WTC11 (cell line): ENCODE measurements at regions of chr13 and their contacts with region 1.

Region 1: GRCh38 chr13:39415008-39415802 is 187.8 kb downstream of the LHFPL6 start:
- DNase-seq: peak; percentile 56
- ATAC-seq: peak; percentile 36; the same call in 1 of the 2 replicates
- H3K4me3 Mint-ChIP-seq: no peak overlapping the region
- H3K27ac Mint-ChIP-seq: no peak overlapping the region
- H3K4me1 Mint-ChIP-seq: peaks cover 75% of the 10 kb centered on the region
- H3K27me3 Mint-ChIP-seq: peaks cover 6% of the 10 kb centered on the region
- CTCF ChIP-seq: peak; percentile 21; the same call in 1 of the 2 replicates

Region 2: GRCh38 chr13:39531646-39532045 is 116.4 kb after region 1 on chr13:
- CTCF ChIA-PET with region 1: no interaction called
- POLR2A ChIA-PET with region 1: no interaction called
- DNase-seq: no peak
- ATAC-seq: no peak
- H3K4me3 Mint-ChIP-seq: no peak overlapping the region
- H3K27ac Mint-ChIP-seq: no peak overlapping the region
- H3K4me1 Mint-ChIP-seq: peaks cover 9% of the 10 kb centered on the region
- H3K27me3 Mint-ChIP-seq: no peaks in the 10 kb centered on the region
- CTCF ChIP-seq: no peak

Region 3: DNA sequence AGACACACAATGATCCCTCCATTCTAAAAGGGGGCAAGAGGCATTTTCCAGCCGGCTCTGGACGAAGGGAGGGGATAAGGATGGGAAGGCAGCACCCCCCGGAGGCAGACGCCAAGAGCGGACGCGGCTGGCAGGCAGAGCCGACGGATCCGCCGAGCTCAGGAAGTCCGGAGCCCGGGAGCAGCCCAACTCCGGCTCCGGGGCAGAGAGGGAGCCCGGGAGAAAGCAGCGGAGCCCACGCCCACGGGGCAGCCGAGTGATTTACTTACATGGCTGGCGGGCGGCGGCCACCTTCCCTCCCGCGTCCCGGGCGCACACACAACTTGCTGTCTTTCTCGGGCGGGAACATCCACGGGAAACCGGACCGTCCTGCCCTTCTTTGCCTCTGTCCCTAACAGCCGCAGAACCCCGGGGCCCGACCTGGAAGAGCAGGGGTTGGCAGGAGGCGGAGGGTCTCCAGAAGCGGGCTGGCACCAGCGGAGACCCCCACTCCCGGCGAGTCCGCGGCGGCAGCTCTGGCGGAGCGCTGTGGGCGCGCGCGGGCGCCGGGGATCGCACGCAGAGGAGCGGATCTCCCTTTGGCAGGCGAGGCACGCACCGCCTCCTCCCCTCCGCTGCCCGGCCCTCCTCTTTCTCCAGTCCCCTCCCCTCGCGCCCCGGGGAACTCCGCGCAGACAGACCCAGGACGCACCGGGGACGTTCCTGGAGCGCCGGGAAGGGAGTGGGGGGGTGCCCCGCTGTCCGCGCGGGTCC is 187.6 kb after region 1 on chr13 and contains the start of gene LHFPL6:
- CTCF ChIA-PET with region 1: interaction called, 14 read pairs
- POLR2A ChIA-PET with region 1: no interaction called
- DNase-seq: peak; percentile 79
- ATAC-seq: peak; percentile 84
- H3K4me3 Mint-ChIP-seq: peak within 1 kb of the TSS; percentile 88
- H3K27ac Mint-ChIP-seq: no peak within 1 kb of the TSS
- H3K4me1 Mint-ChIP-seq: peaks cover 15% of the 10 kb centered on the region
- H3K27me3 Mint-ChIP-seq: peaks cover 75% of the 10 kb centered on the region
- CTCF ChIP-seq: no peak
- total RNA-seq, gene LHFPL6: 1.4 to 4.5 TPM (median 2.1 TPM) in 3 replicates

Region 4: GRCh38 chr13:39788102-39788501 is 372.9 kb after region 1 on chr13:
- CTCF ChIA-PET with region 1: no interaction called
- POLR2A ChIA-PET with region 1: no interaction called
- DNase-seq: no peak
- ATAC-seq: peak; percentile 77
- H3K4me3 Mint-ChIP-seq: no peak overlapping the region
- H3K27ac Mint-ChIP-seq: no peak overlapping the region
- H3K4me1 Mint-ChIP-seq: peaks cover 35% of the 10 kb centered on the region
- H3K27me3 Mint-ChIP-seq: peaks cover 2% of the 10 kb centered on the region; the same call in 1 of the 2 replicates
- CTCF ChIP-seq: no peak